AG04449 (cell line): ENCODE measurements at regions of chr6 and their contacts with region 1.

Region 1: DNA sequence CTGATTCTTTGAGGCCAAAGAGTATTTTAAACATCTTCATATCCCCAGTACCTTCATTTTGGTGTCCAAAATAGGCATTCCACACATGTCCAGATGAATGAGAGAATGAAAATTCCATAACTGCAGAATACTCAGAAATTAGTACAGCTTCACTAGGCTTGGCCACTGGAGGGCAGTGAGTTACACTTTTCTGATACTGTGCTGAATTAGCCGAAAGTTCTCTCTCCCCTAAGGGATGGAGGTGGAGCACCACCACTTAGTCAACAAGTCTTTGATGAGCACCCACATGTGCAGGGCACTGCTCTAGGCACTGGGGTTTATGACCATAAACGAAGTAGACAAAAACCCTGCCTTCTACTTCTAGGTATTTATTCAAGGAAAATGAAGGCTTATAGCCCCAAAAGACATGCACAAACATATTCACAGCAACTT is 46.0 kb upstream of the TMEM217 start:
- DNase-seq: no peak
- H3K4me3 ChIP-seq: no peak overlapping the region
- CTCF ChIP-seq: peak; percentile 74

Region 2: GRCh38 chr6:37314487-37315156 is 10.7 kb after region 1 on chr6:
- CTCF ChIA-PET with region 1: interaction called, 73 read pairs
- POLR2A ChIA-PET with region 1: no interaction called
- DNase-seq: no peak
- H3K4me3 ChIP-seq: no peak overlapping the region
- CTCF ChIP-seq: peak; percentile 58

Region 3: DNA sequence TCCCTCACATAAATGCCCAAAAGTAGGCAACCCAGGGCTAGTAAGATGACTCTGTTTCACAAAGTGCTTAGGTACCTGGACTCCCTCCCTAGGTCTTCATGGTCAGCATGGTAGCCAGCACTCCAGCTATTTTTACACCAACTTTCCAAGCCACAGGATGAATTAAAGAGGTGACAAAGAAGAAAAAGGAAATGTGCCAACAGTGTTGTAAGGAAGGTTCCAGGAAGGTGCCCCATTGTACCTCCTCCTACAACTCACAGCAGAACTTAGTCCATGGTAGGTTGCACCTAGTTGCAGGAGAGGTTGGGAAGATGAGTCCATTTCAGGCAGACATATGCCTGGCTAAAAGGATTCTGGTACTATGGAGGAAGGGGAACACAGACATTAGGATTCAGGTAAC is 30.1 kb after region 1 on chr6:
- CTCF ChIA-PET with region 1: no interaction called
- POLR2A ChIA-PET with region 1: no interaction called
- DNase-seq: no peak
- H3K4me3 ChIP-seq: no peak overlapping the region
- CTCF ChIP-seq: no peak